T-cell (primary cell): ENCODE measurements at regions of chr4 and their contacts with region 1.

Region 1: GRCh38 chr4:153643406-153644383 is 40.4 kb upstream of the TLR2 start:
- DNase-seq: peak in 3 of 35 experiments; percentile 9 to 70 (median 10)
- ATAC-seq: peak; percentile 84 to 90 (median 87)
- H3K4me3 ChIP-seq: no peak overlapping the region
- H3K4me3 Mint-ChIP-seq: no peak overlapping the region
- H3K27ac ChIP-seq: peak overlapping the region; percentile 49
- H3K27ac Mint-ChIP-seq: peak overlapping the region in 1 of 2 donors; percentile 0
- H3K4me1 ChIP-seq: peaks cover 3 to 4% of the 10 kb centered on the region in 2 experiments
- H3K4me1 Mint-ChIP-seq: peaks cover 9 to 15% (median 10%) of the 10 kb centered on the region in 3 donors
- H3K27me3 ChIP-seq: no peaks in the 10 kb centered on the region
- H3K27me3 Mint-ChIP-seq: no peaks in the 10 kb centered on the region

Region 2: DNA sequence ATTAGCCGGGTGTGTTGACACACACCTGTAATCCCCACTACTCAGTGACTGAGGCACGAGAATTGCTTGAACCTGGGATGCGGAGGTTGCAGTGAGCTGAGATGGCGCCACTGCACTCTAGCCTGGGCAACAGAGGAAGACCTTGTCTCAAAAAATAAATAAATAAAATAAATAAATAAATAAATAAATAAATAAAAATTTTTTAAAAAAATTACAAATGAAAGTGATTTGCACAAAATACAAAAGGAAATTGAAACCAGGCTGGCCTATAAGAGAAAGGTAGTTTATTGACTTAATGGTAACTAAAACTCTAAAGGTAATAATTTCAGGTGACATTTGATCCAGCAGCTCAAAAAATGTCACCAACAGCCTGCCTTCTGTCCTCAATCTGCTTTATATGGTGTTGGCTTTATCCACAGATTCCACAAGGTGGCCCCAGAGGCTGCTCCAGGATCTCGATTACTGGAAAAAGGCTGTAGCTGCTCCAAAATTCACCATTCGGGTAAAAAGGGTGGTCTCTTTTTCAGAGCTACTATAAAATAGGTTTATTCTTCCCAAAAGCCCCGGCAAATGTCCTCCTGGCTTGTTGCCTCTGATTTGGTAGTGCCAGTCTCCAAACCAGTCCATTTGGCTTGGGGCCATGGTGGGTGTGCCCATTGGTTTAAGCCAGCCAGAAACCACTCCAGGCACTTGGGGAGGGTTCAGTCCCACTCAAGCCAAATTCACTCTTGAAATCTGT is 500.8 kb before region 1 on chr4:
- CTCF ChIA-PET with region 1: interaction called, 3 to 13 read pairs
- POLR2A ChIA-PET with region 1: no interaction called
- DNase-seq: peak; percentile 17 to 74 (median 39)
- ATAC-seq: peak; percentile 52 to 86 (median 74)
- H3K4me3 ChIP-seq: no peak overlapping the region
- H3K4me3 Mint-ChIP-seq: no peak overlapping the region
- H3K27ac ChIP-seq: no peak overlapping the region
- H3K27ac Mint-ChIP-seq: no peak overlapping the region
- H3K4me1 ChIP-seq: peaks cover 0 to 4% of the 10 kb centered on the region in 2 experiments
- H3K4me1 Mint-ChIP-seq: peaks cover 0 to 5% (median 4%) of the 10 kb centered on the region in 3 donors
- H3K27me3 ChIP-seq: peaks cover 0 to 6% of the 10 kb centered on the region in 2 experiments
- H3K27me3 Mint-ChIP-seq: no peaks in the 10 kb centered on the region

Region 3: DNA sequence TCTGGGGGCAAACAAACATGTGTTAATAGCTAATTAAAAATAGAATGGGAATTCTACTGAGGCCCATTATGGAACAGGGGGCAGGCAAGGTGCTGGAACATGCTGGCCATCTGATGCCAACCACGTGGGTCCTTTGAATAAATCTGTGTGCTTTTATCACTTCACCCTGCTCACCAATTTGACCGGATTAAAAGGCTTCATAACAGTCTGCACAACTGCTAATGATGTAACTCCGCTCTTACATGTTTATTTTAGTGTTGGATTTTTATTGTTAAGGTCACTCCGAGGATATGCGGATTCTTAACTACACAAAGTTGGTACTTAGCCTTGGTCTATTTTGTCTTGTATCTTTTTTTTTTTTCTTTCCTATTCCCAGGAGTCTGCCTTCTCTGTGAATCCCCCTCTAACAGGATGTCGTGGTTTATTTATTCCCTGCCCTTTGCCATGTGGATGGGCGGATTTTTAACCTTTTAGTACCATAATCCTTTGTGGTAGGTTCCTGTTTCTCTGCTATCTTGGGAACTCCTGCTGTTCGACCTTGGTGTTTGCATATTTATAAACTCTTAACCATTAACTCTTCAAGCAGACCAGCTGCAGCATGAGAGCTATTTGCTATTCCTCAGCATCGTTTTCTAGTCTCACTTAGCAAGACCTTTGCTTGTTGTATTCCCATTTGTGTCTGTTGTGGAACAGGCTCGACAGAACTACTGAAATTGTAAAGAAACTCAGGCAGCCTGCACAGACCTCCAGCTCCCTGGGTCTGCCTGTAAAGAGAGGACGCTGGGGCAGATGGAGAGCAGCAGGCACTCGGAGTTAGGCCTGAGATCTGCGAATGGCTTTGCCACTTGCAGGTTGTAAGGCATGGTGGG is 401.5 kb before region 1 on chr4:
- CTCF ChIA-PET with region 1: no interaction called
- POLR2A ChIA-PET with region 1: no interaction called
- DNase-seq: no peak
- ATAC-seq: no peak
- H3K4me3 ChIP-seq: no peak overlapping the region
- H3K4me3 Mint-ChIP-seq: no peak overlapping the region
- H3K27ac ChIP-seq: no peak overlapping the region
- H3K27ac Mint-ChIP-seq: peak overlapping the region; percentile 32 to 49
- H3K4me1 ChIP-seq: no peaks in the 10 kb centered on the region
- H3K4me1 Mint-ChIP-seq: peaks cover 0 to 5% (median 0%) of the 10 kb centered on the region in 3 donors
- H3K27me3 ChIP-seq: peaks cover 0 to 4% of the 10 kb centered on the region in 2 experiments
- H3K27me3 Mint-ChIP-seq: no peaks in the 10 kb centered on the region

Region 4: GRCh38 chr4:153750197-153750817 is 106.6 kb after region 1 on chr4:
- CTCF ChIA-PET with region 1: interaction called, 6 to 11 read pairs
- POLR2A ChIA-PET with region 1: interaction called in 1 of 2 experiments, 4 read pairs
- DNase-seq: peak in 34 of 35 experiments; percentile 21 to 76 (median 45)
- ATAC-seq: peak; percentile 58 to 75 (median 70)
- H3K4me3 ChIP-seq: no peak overlapping the region
- H3K4me3 Mint-ChIP-seq: no peak overlapping the region
- H3K27ac ChIP-seq: no peak overlapping the region
- H3K27ac Mint-ChIP-seq: no peak overlapping the region
- H3K4me1 ChIP-seq: peaks cover 7 to 8% of the 10 kb centered on the region in 2 experiments
- H3K4me1 Mint-ChIP-seq: peaks cover 10 to 12% (median 10%) of the 10 kb centered on the region in 3 donors
- H3K27me3 ChIP-seq: no peaks in the 10 kb centered on the region
- H3K27me3 Mint-ChIP-seq: peaks cover 0 to 5% of the 10 kb centered on the region in 2 donors